T-cell (primary cell): ENCODE measurements at regions of chr6 and their contacts with region 1.

Region 1: GRCh38 chr6:42547407-42548329 is 16.2 kb upstream of the UBR2 start:
- DNase-seq: peak; percentile 64 to 91 (median 83)
- ATAC-seq: peak; percentile 96 to 99 (median 99)
- H3K4me3 ChIP-seq: peak overlapping the region; percentile 35 to 50
- H3K4me3 Mint-ChIP-seq: peak overlapping the region; percentile 60 to 71 (median 62)
- H3K27ac ChIP-seq: no peak overlapping the region
- H3K27ac Mint-ChIP-seq: peak overlapping the region in 1 of 2 donors; percentile 61
- H3K4me1 ChIP-seq: peaks cover 3 to 12% of the 10 kb centered on the region in 2 experiments
- H3K4me1 Mint-ChIP-seq: peaks cover 10 to 12% (median 12%) of the 10 kb centered on the region in 3 donors
- H3K27me3 ChIP-seq: no peaks in the 10 kb centered on the region
- H3K27me3 Mint-ChIP-seq: peaks cover 2 to 8% of the 10 kb centered on the region in 2 donors

Region 2: GRCh38 chr6:42217519-42218367 is 329.9 kb before region 1 on chr6 and contains the start of gene MRPS10:
- CTCF ChIA-PET with region 1: interaction called, 4 to 39 read pairs
- POLR2A ChIA-PET with region 1: interaction called, 4 to 5 read pairs
- DNase-seq: peak; percentile 72 to 95 (median 89)
- ATAC-seq: peak; percentile 99 to 100 (median 99)
- H3K4me3 ChIP-seq: peak within 1 kb of the TSS; percentile 77 to 85
- H3K4me3 Mint-ChIP-seq: peak within 1 kb of the TSS; percentile 97 to 99 (median 98)
- H3K27ac ChIP-seq: peak within 1 kb of the TSS; percentile 75
- H3K27ac Mint-ChIP-seq: peak within 1 kb of the TSS; percentile 96 to 97
- H3K4me1 ChIP-seq: peaks cover 8 to 28% of the 10 kb centered on the region in 2 experiments
- H3K4me1 Mint-ChIP-seq: peaks cover 15 to 32% (median 25%) of the 10 kb centered on the region in 3 donors
- H3K27me3 ChIP-seq: no peaks in the 10 kb centered on the region
- H3K27me3 Mint-ChIP-seq: no peaks in the 10 kb centered on the region
- total RNA-seq, gene MRPS10: 17.6 to 23.6 (median 20.5) TPM

Region 3: GRCh38 chr6:42313941-42314570 is 233.6 kb before region 1 on chr6:
- CTCF ChIA-PET with region 1: interaction called, 5 to 23 read pairs
- POLR2A ChIA-PET with region 1: no interaction called
- DNase-seq: no peak
- ATAC-seq: no peak
- H3K4me3 ChIP-seq: no peak overlapping the region
- H3K4me3 Mint-ChIP-seq: no peak overlapping the region
- H3K27ac ChIP-seq: no peak overlapping the region
- H3K27ac Mint-ChIP-seq: peak overlapping the region in 1 of 2 donors; percentile 64
- H3K4me1 ChIP-seq: peaks cover 2 to 37% of the 10 kb centered on the region in 2 experiments
- H3K4me1 Mint-ChIP-seq: peaks cover 56 to 59% (median 56%) of the 10 kb centered on the region in 3 donors
- H3K27me3 ChIP-seq: no peaks in the 10 kb centered on the region
- H3K27me3 Mint-ChIP-seq: no peaks in the 10 kb centered on the region

Region 4: GRCh38 chr6:42532038-42532669 is 15.5 kb before region 1 on chr6:
- CTCF ChIA-PET with region 1: interaction called, 8 to 12 read pairs
- POLR2A ChIA-PET with region 1: no interaction called
- DNase-seq: peak in 9 of 35 experiments; percentile 3 to 70 (median 11)
- ATAC-seq: peak in 1 of 4 experiments; percentile 54
- H3K4me3 ChIP-seq: no peak overlapping the region
- H3K4me3 Mint-ChIP-seq: no peak overlapping the region
- H3K27ac ChIP-seq: no peak overlapping the region
- H3K27ac Mint-ChIP-seq: no peak overlapping the region
- H3K4me1 ChIP-seq: no peaks in the 10 kb centered on the region
- H3K4me1 Mint-ChIP-seq: no peaks in the 10 kb centered on the region
- H3K27me3 ChIP-seq: no peaks in the 10 kb centered on the region
- H3K27me3 Mint-ChIP-seq: no peaks in the 10 kb centered on the region

Region 5: DNA sequence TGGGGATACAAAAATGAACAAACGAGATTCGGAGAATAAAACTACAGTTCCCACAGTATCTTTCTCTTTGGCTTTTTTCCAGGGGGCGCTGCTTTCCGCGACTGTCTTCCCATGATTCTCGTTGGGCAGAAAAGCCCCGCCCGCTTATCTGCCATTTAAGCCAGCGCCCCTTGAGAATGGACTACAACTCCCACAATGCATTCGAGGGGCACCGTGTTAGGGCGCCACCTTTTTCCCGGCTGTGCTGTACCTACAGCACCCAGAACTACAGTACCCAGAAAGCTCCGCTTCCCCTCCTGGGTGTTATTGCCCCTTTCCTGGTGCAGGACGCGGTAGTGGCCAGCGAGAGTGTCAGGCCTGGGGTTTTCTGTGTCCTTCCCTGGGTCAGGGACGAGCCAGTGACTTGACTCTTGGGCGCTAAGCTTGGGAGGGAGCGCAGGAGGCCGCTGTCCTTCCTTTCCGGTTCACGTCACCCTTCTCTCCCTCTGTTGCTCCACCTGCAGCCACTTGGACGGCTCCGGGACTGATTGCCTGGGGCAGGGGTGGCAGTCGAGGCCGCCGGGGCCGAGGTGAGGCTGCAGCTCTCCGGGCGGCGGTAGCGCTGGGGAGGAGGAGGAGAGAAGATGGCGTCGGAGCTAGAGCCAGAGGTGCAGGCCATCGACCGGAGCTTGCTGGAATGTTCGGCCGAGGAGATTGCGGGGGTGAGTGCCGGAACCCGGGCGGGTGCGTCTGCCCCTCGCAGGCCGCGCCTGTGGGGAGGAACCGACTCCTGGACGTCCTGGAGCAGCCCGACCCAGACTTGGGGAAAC is 16.2 kb after region 1 on chr6 and contains the start of gene UBR2:
- CTCF ChIA-PET with region 1: interaction called, 8 to 21 read pairs
- POLR2A ChIA-PET with region 1: no interaction called
- DNase-seq: peak; percentile 77 to 96 (median 88)
- ATAC-seq: peak; percentile 96 to 98 (median 96)
- H3K4me3 ChIP-seq: peak within 1 kb of the TSS; percentile 94 to 100
- H3K4me3 Mint-ChIP-seq: peak within 1 kb of the TSS; percentile 93 to 99 (median 96)
- H3K27ac ChIP-seq: peak within 1 kb of the TSS; percentile 93
- H3K27ac Mint-ChIP-seq: peak within 1 kb of the TSS; percentile 90 to 93
- H3K4me1 ChIP-seq: peaks cover 15 to 26% of the 10 kb centered on the region in 2 experiments
- H3K4me1 Mint-ChIP-seq: peaks cover 36 to 44% (median 39%) of the 10 kb centered on the region in 3 donors
- H3K27me3 ChIP-seq: no peaks in the 10 kb centered on the region
- H3K27me3 Mint-ChIP-seq: peaks cover 0 to 3% of the 10 kb centered on the region in 2 donors
- total RNA-seq, gene UBR2: 41.1 to 47.6 (median 44.8) TPM